ENCODE measurements at regions of chr17 and their contacts with region 1.

Region 1: DNA sequence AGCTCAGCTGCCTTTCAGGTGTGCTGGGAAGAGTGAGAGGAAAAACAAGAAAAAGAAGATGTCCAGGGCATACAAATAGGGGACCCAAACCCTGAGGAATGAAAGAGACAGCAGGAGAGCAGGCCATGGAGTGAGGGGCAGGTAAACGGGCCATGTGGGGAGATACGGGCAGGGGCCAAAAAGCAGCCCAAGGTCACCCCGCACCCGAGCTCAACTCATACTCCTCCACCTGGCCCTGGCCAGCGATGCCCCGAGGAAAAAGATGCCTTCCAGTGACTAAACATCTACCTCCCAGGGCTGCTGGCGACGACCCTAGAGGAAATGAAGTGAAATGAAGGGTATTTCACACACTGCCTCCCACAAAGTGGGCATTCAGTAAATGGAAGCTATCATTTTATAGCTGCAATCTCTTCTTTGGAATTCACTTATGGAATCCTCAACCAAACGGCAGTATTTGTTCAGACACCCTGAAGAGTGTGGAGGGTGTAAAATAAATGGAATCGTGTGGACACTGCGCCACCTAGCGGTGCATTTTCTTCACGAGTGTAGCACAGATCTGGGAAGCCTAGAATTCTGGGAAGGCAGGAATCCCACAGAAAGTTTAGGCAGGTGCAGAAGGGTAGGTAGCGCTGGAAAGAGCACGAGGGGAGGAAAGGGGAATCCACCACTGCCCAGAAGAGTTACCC is 14.9 kb downstream of the ELAC2 start:
- DNase-seq: peak; percentile 25 to 90
- H3K4me3 ChIP-seq: no peak overlapping the region
- H3K27ac ChIP-seq: 0 out of 2 replicates have a peak overlapping the region, but pooled peaks have one; percentile 37
- H3K4me1 ChIP-seq: no peaks in the 10 kb centered on the region
- H3K27me3 ChIP-seq: no peaks in the 10 kb centered on the region
- CTCF ChIP-seq: peak; percentile 62 to 80 (median 74)
- EP300 ChIP-seq: no peak
- POLR2A ChIP-seq: no peak
- RAD21 ChIP-seq: peak; percentile 80 to 84

Region 2: DNA sequence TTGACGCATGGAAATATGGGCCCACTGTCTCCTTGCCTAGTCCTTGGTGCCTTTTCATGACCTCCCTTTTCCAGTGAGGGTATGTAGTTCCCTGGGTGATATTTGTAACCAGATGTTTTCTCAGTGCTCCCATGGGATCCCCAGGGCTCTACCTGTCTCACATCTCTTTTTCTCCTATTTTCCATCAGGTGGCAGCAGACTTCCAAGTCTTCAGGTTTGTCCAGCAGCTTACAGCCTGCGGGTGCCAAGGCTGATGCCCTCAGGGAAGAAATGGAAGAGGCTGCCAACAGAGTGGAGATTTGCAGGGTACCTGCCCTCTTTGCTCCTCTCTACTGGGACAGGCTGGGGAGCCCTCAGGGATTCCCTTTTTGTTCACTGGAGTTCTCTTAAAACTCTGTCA is 74.2 kb before region 1 on chr17:
- CTCF ChIA-PET with region 1: interaction called, 11 read pairs
- POLR2A ChIA-PET with region 1: no interaction called
- DNase-seq: no peak
- H3K4me3 ChIP-seq: no peak overlapping the region
- H3K27ac ChIP-seq: no peak overlapping the region
- H3K4me1 ChIP-seq: no peaks in the 10 kb centered on the region
- H3K27me3 ChIP-seq: no peaks in the 10 kb centered on the region
- CTCF ChIP-seq: peak in 2 of 3 experiments; percentile 41 to 49; a peak in 3 of 4 replicates
- EP300 ChIP-seq: no peak
- POLR2A ChIP-seq: no peak
- RAD21 ChIP-seq: peak; percentile 63 to 75

Region 3: GRCh38 chr17:12985431-12986293 is 17.2 kb before region 1 on chr17:
- CTCF ChIA-PET with region 1: interaction called, 18 read pairs
- POLR2A ChIA-PET with region 1: interaction called, 7 read pairs
- DNase-seq: no peak
- H3K4me3 ChIP-seq: no peak overlapping the region
- H3K27ac ChIP-seq: no peak overlapping the region
- H3K4me1 ChIP-seq: peaks cover 0 to 17% (median 6%) of the 10 kb centered on the region in 4 experiments; a peak in 5 of 7 replicates
- H3K27me3 ChIP-seq: no peaks in the 10 kb centered on the region
- CTCF ChIP-seq: no peak
- EP300 ChIP-seq: no peak
- POLR2A ChIP-seq: no peak
- RAD21 ChIP-seq: no peak

Region 4: DNA sequence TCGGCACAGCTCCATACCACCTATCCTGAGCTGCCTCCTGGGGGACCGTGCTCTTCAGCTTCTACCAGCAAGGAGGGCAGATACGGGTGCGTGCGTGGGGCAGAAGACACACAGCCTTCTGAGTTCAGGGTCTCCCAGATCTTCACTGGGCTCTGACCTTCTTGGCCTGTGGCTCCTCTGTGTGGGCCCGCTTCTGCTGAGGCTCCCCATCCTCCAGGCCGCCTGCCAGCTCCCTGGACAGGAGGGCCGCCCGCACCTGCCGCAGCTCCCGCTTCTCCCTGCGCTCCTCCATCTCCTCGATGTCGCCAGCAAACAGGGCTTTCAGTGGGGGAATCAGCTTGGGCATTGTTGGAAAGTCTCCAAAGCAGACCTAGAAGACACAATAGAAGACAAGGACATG is 10.2 kb before region 1 on chr17:
- CTCF ChIA-PET with region 1: interaction called, 18 read pairs
- POLR2A ChIA-PET with region 1: interaction called, 13 read pairs
- DNase-seq: no peak
- H3K4me3 ChIP-seq: no peak overlapping the region
- H3K27ac ChIP-seq: no peak overlapping the region
- H3K4me1 ChIP-seq: peaks cover 0 to 6% (median 0%) of the 10 kb centered on the region in 4 experiments; a peak in 2 of 7 replicates
- H3K27me3 ChIP-seq: no peaks in the 10 kb centered on the region
- CTCF ChIP-seq: no peak
- EP300 ChIP-seq: no peak
- POLR2A ChIP-seq: no peak
- RAD21 ChIP-seq: no peak

Region 5: GRCh38 chr17:13017659-13018459 is 14.9 kb after region 1 on chr17 and contains the start of gene ELAC2:
- CTCF ChIA-PET with region 1: interaction called, 9 read pairs
- POLR2A ChIA-PET with region 1: interaction called, 12 read pairs
- DNase-seq: peak; percentile 92 to 95
- H3K4me3 ChIP-seq: peak within 1 kb of the TSS; percentile 74 to 94 (median 88)
- H3K27ac ChIP-seq: peak within 1 kb of the TSS; percentile 63; the same call in 1 of the 2 replicates
- H3K4me1 ChIP-seq: peaks cover 0 to 3% (median under 1%) of the 10 kb centered on the region in 4 experiments; a peak in 2 of 7 replicates
- H3K27me3 ChIP-seq: no peaks in the 10 kb centered on the region
- CTCF ChIP-seq: no peak
- EP300 ChIP-seq: no peak
- POLR2A ChIP-seq: peak; percentile 86 to 95
- RAD21 ChIP-seq: no peak
- total RNA-seq, gene ELAC2: 91.6 and 94.9 TPM in 2 replicates